MCF 10A (cell line): ENCODE measurements at regions of chr7 and their contacts with region 1.

Region 1: DNA sequence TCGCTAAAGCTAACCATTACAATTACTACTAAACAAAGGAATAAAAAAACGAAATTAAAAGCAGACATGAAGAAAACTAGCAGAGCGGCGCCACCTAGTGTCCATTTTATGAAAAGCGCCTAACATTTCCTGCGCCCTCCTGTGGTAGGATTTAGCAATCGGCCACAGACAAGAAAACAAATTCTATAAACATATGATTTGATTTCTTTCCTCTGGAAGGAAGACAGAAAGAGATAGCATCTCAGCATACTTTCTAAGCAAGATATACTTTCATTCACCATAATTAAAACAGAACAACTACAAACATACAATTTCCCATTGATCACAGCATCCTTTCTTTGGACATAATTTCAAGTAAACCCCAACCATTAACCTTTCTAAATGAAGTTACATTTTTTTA is 337.7 kb upstream of the NPVF start:
- DNase-seq: peak; percentile 71
- H3K4me3 Mint-ChIP-seq: no peak overlapping the region
- H3K27ac Mint-ChIP-seq: no peak overlapping the region
- H3K4me1 Mint-ChIP-seq: no peaks in the 10 kb centered on the region
- H3K27me3 Mint-ChIP-seq: peaks cover 45% of the 10 kb centered on the region
- CTCF ChIP-seq: peak; percentile 100

Region 2: DNA sequence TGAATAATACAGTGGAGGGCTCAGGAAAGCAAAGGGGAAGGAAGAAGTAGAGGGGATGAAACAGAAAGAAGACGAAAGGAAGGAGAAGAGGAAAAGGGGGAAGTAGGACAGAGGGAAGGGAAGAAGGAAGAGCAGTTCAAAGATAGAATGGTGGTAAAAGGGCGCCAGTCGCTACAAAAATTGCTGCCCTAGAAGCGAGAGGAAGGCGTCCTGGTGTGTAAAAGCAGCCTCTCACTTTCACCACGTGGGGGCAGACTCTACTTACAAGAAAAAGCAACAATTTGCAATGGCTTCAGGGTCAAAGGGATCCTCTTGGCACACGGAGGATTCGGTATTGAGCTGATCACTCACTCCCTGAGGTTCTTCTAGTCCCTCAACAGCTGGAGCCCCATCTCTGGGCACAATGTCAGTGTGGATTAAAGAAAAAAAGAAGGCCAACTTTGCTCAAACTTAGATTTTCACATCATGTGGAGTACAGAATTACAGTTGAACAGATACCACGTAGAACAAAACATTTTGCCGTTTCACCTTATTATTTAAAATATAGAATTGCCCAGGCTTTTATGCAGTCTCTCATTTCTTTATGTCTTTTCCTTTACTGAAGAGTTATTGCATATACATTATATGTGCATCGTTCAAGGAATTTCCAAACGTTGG is 306.2 kb before region 1 on chr7:
- CTCF ChIA-PET with region 1: interaction called, 121 read pairs
- POLR2A ChIA-PET with region 1: no interaction called
- intact Hi-C with region 1: loop called (anchors 1 kb)
- DNase-seq: peak; percentile 83
- H3K4me3 Mint-ChIP-seq: no peak overlapping the region
- H3K27ac Mint-ChIP-seq: no peak overlapping the region
- H3K4me1 Mint-ChIP-seq: peaks cover 9% of the 10 kb centered on the region
- H3K27me3 Mint-ChIP-seq: peaks cover 71% of the 10 kb centered on the region
- CTCF ChIP-seq: peak; percentile 89

Region 3: DNA sequence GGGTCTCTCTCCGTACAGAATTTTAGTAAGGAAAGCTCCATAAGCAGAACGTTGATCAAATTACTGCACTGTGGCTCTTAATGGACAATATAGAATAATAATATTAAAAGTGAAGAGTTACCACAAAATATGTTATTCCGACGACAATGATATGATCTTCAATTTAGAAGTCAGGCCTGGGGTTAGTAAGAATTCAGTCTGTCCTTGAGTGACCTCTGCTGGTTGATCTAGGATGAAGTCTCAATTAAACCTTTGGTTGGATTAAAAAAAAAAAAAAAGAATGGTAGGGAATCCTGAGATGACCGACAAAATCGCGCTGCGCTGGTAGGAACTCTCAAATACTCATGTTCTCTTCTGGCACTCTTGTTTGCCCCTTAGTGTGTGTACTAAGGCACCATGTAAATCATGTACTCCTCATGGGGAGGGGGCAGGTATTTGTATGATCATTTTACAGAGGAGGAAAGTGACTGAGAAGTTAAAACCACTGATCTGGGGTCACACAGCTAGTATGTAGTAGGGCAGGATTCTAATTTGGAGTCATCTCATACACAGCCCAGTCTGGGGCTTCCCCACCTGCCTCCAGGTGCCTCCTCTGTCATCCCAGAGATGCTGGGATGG is 176.4 kb before region 1 on chr7:
- CTCF ChIA-PET with region 1: interaction called, 173 read pairs
- POLR2A ChIA-PET with region 1: no interaction called
- intact Hi-C with region 1: loop called (anchors 1 kb)
- DNase-seq: peak; percentile 61
- H3K4me3 Mint-ChIP-seq: no peak overlapping the region
- H3K27ac Mint-ChIP-seq: no peak overlapping the region
- H3K4me1 Mint-ChIP-seq: no peaks in the 10 kb centered on the region
- H3K27me3 Mint-ChIP-seq: peaks cover 96% of the 10 kb centered on the region
- CTCF ChIP-seq: peak; percentile 62

Region 4: GRCh38 chr7:25527665-25528170 is 38.2 kb before region 1 on chr7:
- CTCF ChIA-PET with region 1: interaction called, 12 read pairs
- POLR2A ChIA-PET with region 1: no interaction called
- intact Hi-C with region 1: no loop called
- DNase-seq: no peak
- H3K4me3 Mint-ChIP-seq: no peak overlapping the region
- H3K27ac Mint-ChIP-seq: no peak overlapping the region
- H3K4me1 Mint-ChIP-seq: no peaks in the 10 kb centered on the region
- H3K27me3 Mint-ChIP-seq: peaks cover 75% of the 10 kb centered on the region
- CTCF ChIP-seq: no peak

Region 5: GRCh38 chr7:25586513-25586912 is 20.6 kb after region 1 on chr7:
- CTCF ChIA-PET with region 1: interaction called, 10 read pairs
- POLR2A ChIA-PET with region 1: interaction called, 4 read pairs
- intact Hi-C with region 1: no loop called
- DNase-seq: no peak
- H3K4me3 Mint-ChIP-seq: no peak overlapping the region
- H3K27ac Mint-ChIP-seq: no peak overlapping the region
- H3K4me1 Mint-ChIP-seq: no peaks in the 10 kb centered on the region
- H3K27me3 Mint-ChIP-seq: peaks cover 88% of the 10 kb centered on the region
- CTCF ChIP-seq: no peak